PC-3 (cell line): ENCODE measurements at regions of chr5 and their contacts with region 1.

Region 1: DNA sequence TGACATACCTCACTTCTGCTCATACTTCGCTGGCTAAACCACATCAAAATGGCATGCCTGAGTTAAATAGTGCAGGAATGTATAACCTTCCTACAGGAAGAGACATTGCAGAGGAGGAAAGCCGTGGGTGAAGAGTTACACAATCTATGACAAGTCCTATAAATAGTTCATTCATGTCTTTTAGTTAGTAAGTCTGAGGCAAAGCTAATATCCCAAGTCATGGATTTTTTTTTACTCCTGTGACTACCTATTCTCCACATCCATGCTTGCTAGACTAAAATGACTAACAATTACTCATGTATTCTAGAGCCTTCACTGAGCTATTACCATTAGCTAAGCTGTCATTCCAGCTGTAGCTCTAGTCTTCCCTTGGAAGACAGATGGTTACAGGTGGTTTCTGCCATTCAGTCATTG is 391.3 kb downstream of the NR2F1-AS1 start:
- DNase-seq: peak; percentile 97
- ATAC-seq: peak; percentile 66
- H3K4me3 ChIP-seq: no peak overlapping the region
- H3K27ac ChIP-seq: peak overlapping the region; percentile 88
- H3K4me1 ChIP-seq: peaks cover 66% of the 10 kb centered on the region
- H3K27me3 ChIP-seq: no peaks in the 10 kb centered on the region
- CTCF ChIP-seq: no peak

Region 2: DNA sequence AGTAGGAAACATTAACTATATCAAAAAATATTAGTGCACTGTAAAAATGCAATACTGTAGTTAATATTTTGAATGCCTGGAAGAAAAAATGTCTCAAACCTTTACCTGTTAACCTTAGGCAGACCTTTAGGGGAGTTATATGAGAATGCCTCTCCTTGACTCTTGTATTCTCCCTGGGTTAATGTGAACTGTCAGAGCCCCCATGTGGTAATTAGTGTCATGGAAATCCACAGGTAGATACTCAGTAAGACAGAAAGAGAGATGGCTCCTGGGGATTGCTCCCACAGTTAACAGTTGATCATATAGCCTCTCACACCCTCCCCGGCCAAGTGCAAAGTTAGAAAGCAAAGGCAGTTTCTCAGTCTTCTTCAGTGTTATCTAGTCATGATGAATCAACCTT is 351.5 kb before region 1 on chr5:
- CTCF ChIA-PET with region 1: no interaction called
- POLR2A ChIA-PET with region 1: no interaction called
- intact Hi-C with region 1: loop called (anchors 10 kb)
- DNase-seq: peak; percentile 52
- ATAC-seq: peak; percentile 17; the same call in 1 of the 2 replicates
- H3K4me3 ChIP-seq: no peak overlapping the region
- H3K27ac ChIP-seq: peak overlapping the region; percentile 83
- H3K4me1 ChIP-seq: peaks cover 29% of the 10 kb centered on the region
- H3K27me3 ChIP-seq: no peaks in the 10 kb centered on the region
- CTCF ChIP-seq: peak; percentile 62

Region 3: DNA sequence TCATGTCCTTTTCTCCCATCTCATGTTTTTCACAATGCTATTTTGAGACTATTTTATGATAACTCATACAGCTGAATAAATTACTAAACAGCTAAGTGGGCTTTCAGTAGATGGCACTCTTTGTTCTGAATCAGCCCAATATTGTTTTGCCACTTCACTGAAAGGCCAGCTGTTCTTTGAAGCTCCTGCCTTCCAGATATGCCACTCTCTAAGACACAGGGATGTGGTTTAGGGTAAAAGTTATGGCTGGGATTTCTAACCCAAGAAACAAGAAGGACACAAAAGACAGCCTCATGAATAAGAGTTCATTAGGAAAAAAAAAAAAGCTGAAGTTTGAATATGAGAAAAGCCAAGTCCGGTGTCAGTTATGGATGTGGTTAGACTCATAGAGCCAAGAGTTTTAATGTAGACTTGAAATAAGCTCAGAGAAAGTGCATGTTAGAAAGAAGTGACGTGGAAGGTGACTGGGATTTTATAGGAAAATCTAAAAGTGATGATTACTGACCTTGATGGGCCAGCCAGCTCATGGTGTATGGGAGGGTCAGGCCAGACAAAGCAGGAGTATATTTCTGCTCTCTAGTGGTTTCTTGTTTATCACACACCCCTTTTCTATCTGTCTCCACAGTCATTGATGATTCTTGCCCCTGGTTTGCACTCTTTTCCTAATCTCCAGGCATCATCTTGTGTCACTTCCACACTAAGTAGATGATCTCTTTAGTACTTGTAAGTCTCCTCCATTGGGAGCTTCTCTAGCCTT is 97.2 kb before region 1 on chr5:
- CTCF ChIA-PET with region 1: interaction called, 10 read pairs
- POLR2A ChIA-PET with region 1: interaction called, 3 read pairs
- intact Hi-C with region 1: loop called (anchors 2 kb)
- DNase-seq: peak; percentile 65
- ATAC-seq: peak; percentile 87
- H3K4me3 ChIP-seq: no peak overlapping the region
- H3K27ac ChIP-seq: peak overlapping the region; percentile 24; the same call in 1 of the 2 replicates
- H3K4me1 ChIP-seq: peaks cover 14% of the 10 kb centered on the region
- H3K27me3 ChIP-seq: no peaks in the 10 kb centered on the region
- CTCF ChIP-seq: peak; percentile 74

Region 4: DNA sequence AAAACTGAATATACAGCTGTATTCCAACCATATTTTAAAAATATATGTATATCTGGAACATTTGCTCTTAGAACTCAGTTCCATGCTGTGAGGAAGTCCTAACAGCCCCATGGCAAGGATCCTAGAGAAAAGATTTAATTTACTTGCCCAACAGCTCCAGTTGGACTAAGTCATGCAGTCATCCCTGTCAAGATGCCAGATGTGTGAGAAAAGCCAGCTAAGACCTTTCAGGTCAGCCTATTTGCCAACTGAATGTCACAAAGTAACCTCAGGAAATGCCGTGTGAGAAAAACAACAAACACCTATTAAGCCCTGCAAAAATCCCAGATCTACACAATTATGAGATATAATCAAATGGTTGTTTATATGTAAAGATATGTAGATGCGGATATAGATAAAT is 25.0 kb before region 1 on chr5:
- CTCF ChIA-PET with region 1: no interaction called
- POLR2A ChIA-PET with region 1: interaction called, 4 read pairs
- intact Hi-C with region 1: loop called (anchors 1 kb)
- DNase-seq: peak; percentile 95
- ATAC-seq: peak; percentile 10; the same call in 1 of the 2 replicates
- H3K4me3 ChIP-seq: no peak overlapping the region
- H3K27ac ChIP-seq: peak overlapping the region; percentile 93
- H3K4me1 ChIP-seq: peaks cover 56% of the 10 kb centered on the region
- H3K27me3 ChIP-seq: no peaks in the 10 kb centered on the region
- CTCF ChIP-seq: no peak

Region 5: DNA sequence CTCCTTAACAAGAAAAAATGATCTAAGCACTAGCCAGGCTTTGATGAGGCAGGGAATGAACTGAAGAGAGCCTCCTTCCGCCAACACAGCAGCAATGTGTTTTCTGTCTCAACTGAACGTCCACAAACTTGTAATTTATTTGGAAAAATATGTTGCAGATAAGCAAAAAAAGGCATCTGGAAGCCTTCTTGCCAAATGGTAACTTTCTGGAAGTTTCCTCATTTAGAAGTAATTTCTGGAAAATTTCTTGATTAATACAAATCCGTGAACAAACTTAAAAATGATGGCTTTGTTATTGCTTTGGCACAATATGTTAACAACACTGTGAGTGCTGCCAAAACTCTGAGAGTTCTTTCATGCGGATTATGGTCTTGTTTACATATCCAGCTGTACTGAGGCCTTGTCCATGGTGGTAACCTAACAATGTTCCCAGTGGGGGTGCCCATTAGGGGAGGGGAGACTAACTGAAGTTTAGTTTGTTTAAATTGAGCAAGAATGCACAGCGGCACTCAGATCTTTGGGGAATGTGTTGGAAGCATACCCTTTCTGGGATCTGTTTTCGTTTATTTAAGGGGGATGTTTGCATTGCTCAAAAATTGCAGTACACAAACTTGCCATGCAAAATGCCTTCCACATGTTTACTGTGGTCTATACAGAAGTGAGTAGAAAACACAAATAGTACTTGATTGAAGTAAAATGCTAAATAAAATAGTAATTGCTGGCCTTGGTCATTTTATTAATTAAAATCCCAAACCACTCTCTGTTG is 56.6 kb after region 1 on chr5:
- CTCF ChIA-PET with region 1: no interaction called
- POLR2A ChIA-PET with region 1: no interaction called
- intact Hi-C with region 1: no loop called
- DNase-seq: no peak
- ATAC-seq: no peak
- H3K4me3 ChIP-seq: no peak overlapping the region
- H3K27ac ChIP-seq: no peak overlapping the region
- H3K4me1 ChIP-seq: peaks cover 24% of the 10 kb centered on the region
- H3K27me3 ChIP-seq: no peaks in the 10 kb centered on the region
- CTCF ChIP-seq: no peak

Region 6: DNA sequence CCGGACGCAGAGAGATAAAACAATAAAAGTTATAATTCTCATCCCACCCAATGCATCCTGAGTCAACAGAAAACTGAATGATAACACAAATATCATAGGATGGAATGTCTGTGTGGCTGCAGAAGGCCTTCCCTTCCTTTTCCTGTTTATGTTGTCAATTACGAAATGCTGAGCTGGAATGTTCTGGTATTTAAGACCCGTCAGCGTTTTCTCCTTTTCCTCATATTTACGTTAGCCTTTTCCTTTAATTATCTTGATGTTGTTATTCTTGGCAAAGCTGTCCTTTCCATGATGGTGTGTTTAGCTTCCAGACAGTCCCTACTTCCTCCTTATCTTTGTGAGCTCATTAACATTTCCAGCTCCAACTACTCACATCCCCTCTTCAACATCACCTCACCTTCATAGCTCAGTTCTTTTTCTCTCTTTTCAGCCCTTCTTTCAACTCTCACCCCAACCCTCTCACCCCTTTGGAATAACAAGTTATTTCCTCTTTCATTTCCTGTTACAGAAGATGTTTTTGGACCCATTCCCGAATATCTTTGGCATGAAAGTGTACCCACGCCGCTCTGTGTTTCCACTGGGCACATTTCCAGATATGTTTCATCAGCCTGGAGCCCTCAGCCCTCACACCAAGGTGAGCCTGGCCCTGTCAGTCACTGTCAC is 169.7 kb after region 1 on chr5:
- CTCF ChIA-PET with region 1: no interaction called
- POLR2A ChIA-PET with region 1: no interaction called
- intact Hi-C with region 1: loop called (anchors 1 kb)
- DNase-seq: peak; percentile 98
- ATAC-seq: peak; percentile 58
- H3K4me3 ChIP-seq: peak overlapping the region; percentile 40
- H3K27ac ChIP-seq: peak overlapping the region; percentile 78
- H3K4me1 ChIP-seq: peaks cover 58% of the 10 kb centered on the region
- H3K27me3 ChIP-seq: no peaks in the 10 kb centered on the region
- CTCF ChIP-seq: no peak